Ascending aorta (tissue), 2 donors: ENCODE measurements at regions of chr12 and their contacts with region 1.

Region 1: DNA sequence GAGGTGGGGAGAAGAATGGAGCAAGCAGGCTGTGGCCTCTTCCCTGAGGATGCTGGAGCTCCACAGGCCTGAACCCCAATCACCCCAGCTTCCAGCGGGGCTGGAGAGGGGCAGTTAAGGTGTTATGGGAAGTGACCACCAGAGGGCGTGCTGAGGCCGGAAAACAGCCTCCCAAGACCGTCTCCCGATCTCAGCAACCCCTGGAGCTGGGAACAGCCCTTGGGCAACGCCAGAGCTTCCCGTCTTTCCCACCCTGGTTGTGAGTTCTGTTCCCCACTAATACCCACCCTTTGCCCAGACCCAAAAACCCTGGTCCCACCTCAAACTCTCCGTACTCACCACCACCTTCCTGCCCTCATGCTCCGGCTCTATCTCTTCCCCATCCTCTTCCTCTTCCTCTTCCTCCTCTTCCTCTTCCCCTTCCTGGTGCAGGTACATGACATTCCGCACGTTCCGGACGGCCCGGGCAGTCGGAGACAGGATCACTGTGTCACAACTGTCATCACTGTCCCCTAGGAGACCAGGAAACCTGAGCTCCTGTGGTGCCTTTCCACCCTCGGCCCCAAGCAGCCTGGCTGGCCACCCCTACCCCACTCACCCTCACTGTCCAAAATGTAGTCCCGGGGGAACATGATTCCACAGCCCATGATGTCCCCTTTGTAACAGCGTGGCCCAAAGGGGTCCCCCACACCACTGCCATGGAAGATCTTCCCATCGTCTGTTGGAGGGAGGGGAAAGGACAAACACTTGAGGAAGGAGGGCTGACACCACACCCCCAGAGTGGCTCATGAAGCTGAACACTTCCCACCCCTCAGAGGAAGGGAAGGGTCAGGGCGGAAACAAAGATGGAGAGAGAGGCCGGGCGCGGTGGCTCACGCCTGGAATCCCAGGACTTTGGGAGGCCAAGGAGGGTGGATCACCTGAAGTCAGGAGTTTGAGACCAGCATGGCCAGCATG is 12.9 kb downstream of the SPRYD3 start:
- DNase-seq: peak in 1 of 2 donors; percentile 91
- H3K4me3 ChIP-seq: peak overlapping the region in 1 of 2 donors; percentile 28
- H3K27ac ChIP-seq: peak overlapping the region; percentile 83 to 95
- H3K4me1 ChIP-seq: peaks cover 27 to 64% of the 10 kb centered on the region in 2 donors
- H3K27me3 ChIP-seq: no peaks in the 10 kb centered on the region
- CTCF ChIP-seq: peak; percentile 85 to 95 (median 88)

Region 2: GRCh38 chr12:52879394-52880351 is 186.6 kb before region 1 on chr12:
- intact Hi-C with region 1: no loop called
- DNase-seq: peak in 1 of 2 donors; percentile 85
- H3K4me3 ChIP-seq: peak overlapping the region in 1 of 2 donors; percentile 52
- H3K27ac ChIP-seq: no peak overlapping the region
- H3K4me1 ChIP-seq: peaks cover 0 to under 1% of the 10 kb centered on the region in 2 donors
- H3K27me3 ChIP-seq: no peaks in the 10 kb centered on the region
- CTCF ChIP-seq: peak; percentile 53 to 81 (median 60)

Region 3: GRCh38 chr12:53195516-53196420 is 129.5 kb after region 1 on chr12:
- intact Hi-C with region 1: loop called (anchors 2 kb)
- DNase-seq: no peak
- H3K4me3 ChIP-seq: no peak overlapping the region
- H3K27ac ChIP-seq: no peak overlapping the region
- H3K4me1 ChIP-seq: peaks cover 3 to 4% of the 10 kb centered on the region in 2 donors
- H3K27me3 ChIP-seq: no peaks in the 10 kb centered on the region
- CTCF ChIP-seq: no peak